HEK293T (cell line): ENCODE measurements at regions of chr18 and their contacts with region 1.

Region 1: DNA sequence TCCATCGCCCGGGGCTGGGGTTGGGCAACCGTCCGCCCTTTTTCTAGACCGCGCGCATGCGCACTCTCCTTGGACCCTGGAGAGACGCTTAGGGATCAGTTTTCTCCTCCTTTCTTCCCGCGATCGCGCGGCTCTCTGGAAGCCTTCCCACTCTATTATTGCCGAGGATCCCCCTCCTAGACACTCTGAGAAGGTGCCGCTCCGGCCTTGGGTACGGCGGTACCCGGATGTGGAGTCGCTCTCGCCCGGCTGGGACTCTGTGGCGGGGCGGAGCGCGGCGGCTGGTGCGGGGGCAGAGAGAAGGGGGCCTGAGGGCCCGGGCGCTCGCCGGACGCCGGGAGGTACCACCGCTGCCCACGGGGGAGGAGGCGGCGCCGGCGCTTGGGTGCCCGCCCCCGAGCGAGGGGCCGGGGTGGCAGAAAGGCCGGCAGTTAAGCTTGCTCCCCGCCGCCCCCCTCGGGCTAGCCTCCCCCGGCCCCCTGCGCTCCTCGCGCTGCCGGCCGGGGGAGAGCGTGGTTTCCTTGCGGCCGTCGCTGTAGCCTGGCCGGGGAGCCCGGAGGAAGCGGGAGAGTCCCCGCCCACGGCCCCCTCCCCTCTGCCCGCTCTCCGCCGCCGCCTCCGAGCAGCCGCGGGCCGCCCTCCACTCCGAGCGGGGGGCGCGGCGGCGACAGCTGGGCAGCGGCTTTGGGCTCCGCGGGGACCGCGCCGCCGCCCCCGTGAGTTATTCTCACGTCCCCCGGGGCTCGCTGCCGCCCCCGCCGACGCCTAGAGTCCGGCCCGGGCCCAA is at the start of gene MIB1:
- DNase-seq: peak; percentile 61

Region 2: GRCh38 chr18:21704603-21705364 is 36.1 kb before region 1 on chr18 and contains the start of gene ABHD3:
- CTCF ChIA-PET with region 1: no interaction called
- POLR2A ChIA-PET with region 1: interaction called, 19 read pairs
- DNase-seq: peak; percentile 95

Region 3: GRCh38 chr18:21727702-21728101 is 13.2 kb before region 1 on chr18:
- CTCF ChIA-PET with region 1: no interaction called
- POLR2A ChIA-PET with region 1: interaction called, 14 read pairs
- DNase-seq: no peak

Region 4: DNA sequence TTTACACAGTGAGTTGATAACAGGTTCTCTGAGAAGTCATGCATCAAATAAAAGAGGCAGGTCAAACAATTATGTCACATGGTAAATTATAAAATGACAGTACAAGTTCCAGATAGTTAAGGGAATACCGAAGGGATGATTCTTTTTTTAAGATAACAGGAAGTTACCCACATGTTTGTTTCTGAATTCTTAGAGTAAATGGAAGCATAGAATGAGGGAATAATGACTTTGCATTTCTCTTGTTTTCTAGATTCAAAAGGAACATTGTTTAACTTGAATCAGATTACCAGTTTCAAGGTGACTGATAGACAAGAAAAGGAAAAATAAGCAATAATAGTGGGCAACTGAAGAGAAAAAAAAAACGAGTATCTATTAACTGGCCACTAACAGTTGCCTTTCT is 124.1 kb after region 1 on chr18:
- CTCF ChIA-PET with region 1: no interaction called
- POLR2A ChIA-PET with region 1: no interaction called
- DNase-seq: no peak